ENCODE measurements at regions of chr19 and their contacts with region 1.

Region 1: DNA sequence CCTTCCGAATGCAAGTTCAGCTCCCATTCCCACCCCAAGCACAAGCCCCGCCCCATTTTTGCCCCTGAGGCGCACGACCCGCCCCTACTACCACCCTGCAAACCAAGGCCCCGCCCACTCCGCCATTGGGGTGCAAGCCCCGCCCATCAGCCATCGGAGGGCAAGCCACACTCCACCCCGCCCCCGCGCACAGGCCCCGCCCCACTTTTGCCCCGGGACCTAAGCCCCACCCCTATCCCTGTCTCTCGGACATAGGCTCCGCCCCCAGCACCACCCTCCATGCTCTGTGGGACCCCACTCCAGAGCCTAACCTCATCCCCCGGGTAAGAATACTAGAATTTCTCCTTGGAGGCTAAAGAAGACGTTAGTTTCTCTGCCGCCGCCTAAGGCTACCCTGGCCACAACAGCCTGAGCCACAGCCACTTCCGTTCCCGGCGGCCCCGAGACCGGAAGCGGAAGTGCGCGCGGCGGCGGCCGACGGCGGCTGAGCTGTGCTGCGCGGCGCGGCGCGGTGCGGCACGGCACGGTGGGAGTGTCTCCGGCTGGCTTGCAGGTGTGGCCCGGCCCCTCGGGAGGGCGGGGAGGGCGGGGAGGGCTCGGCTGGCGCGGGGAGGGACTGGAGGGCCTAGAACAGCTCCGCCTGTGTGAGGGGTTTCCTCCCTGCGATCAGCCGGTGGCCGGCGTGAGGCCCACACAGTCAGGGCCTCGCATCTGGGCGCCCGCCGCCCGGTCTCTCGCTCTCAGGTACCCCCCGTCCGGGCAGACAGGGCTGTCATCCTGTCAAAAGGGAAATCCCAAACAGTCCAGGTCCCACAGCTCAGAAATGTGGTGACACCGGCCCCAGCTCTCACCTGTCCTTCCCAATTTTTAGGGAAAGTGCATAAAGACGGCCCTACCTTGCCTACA is at the start of gene ZNF333:
- DNase-seq: peak; percentile 75
- ATAC-seq: peak; percentile 99
- H3K4me3 ChIP-seq: peak within 1 kb of the TSS; percentile 67 to 91 (median 77)
- H3K27ac ChIP-seq: peak within 1 kb of the TSS; percentile 94
- H3K4me1 ChIP-seq: peaks cover 9% of the 10 kb centered on the region
- H3K27me3 ChIP-seq: no peaks in the 10 kb centered on the region
- CTCF ChIP-seq: no peak
- EP300 ChIP-seq: no peak
- POLR2A ChIP-seq: peak; percentile 59 to 90
- RAD21 ChIP-seq: peak; percentile 12; the same call in 1 of the 2 replicates
- total RNA-seq, gene ZNF333: 3.0 and 3.4 TPM in 2 replicates

Region 2: GRCh38 chr19:14571695-14572490 is 118.0 kb before region 1 on chr19 and contains the start of gene NDUFB7:
- CTCF ChIA-PET with region 1: interaction called, 32 read pairs
- POLR2A ChIA-PET with region 1: interaction called, 40 read pairs
- in situ Hi-C with region 1: loop called (anchors 5 kb)
- intact Hi-C with region 1: loop called (anchors 1 kb)
- DNase-seq: peak; percentile 92
- ATAC-seq: peak; percentile 95
- H3K4me3 ChIP-seq: peak within 1 kb of the TSS; percentile 81 to 99 (median 94)
- H3K27ac ChIP-seq: peak within 1 kb of the TSS; percentile 54
- H3K4me1 ChIP-seq: peaks cover 50% of the 10 kb centered on the region
- H3K27me3 ChIP-seq: no peaks in the 10 kb centered on the region; a peak in 1 of 5 replicates
- CTCF ChIP-seq: peak; percentile 97
- EP300 ChIP-seq: peak in 1 of 2 experiments; percentile 44; a peak in 1 of 4 replicates
- POLR2A ChIP-seq: peak; percentile 85 to 91
- RAD21 ChIP-seq: peak; percentile 33; the same call in 1 of the 2 replicates
- total RNA-seq, gene NDUFB7: 198 and 244 TPM in 2 replicates